HepG2 (cell line): ENCODE measurements at regions of chr10 and their contacts with region 1.

Region 1: DNA sequence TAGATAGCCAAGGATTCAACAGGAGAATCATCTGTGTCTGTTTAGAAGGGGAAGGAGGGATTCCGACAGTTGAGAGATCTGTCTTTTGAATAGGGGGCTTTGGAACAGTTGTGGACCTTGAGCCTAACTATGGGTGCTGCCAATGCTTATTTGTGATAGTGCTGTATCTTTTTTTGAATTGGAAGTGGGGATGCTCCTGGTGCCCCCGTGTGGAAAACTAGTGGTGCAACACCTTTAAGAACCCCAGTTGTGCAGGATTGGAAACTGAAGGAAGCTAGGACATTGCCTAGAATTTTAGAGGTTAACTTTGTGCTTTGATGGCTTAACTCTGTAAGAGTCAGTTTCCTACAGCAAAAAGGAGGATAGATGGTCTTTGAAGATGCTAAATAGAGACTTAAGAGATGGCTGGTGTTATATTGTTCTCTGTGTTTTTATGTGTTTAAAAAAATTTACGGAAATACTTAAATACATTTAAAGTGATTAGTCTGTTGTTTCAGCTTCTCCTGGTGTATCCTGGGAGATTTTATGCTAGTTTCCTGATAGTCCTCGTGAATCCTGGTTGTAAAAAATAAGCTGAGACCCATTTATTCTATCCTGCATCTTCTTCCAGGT is 69.3 kb downstream of the AP3M1 start:
- DNase-seq: peak; percentile 50
- ATAC-seq: peak; percentile 75
- H3K4me3 ChIP-seq: no peak overlapping the region
- H3K27ac ChIP-seq: no peak overlapping the region
- H3K4me1 ChIP-seq: no peaks in the 10 kb centered on the region
- H3K27me3 ChIP-seq: no peaks in the 10 kb centered on the region
- CTCF ChIP-seq: peak; percentile 69
- EP300 ChIP-seq: no peak
- POLR2A ChIP-seq: no peak
- RAD21 ChIP-seq: 0 out of 2 replicates have a peak, but pooled peaks have one; percentile 36

Region 2: DNA sequence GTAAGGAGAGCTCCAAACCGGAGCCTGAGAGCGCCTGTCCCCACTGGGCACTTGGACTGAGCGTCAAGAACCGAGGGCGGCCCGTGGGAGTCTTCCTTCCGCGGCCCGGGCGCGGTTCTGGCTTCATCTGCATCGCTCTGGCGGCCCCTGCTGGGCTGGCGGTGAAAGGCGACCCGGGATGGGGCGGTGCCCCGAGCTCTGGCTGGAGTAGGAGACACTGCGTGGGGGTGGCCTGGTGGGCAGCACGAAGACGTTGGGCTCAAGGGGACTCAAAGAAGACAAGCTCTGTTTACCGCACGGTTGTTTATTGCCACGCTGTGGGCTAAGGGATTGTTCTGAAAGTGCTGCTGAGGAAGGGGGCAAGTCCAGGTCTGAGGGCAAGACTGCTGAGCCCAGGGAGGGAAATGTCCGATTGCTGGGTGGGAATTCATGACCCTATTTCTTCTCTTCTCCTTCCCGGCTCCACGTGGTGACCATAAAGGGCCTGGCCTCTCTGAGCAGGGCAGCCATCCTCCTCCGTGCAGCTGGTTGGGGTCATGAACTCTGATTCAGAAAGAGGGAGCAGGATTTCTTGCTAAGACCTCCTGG is 140.6 kb before region 1 on chr10:
- CTCF ChIA-PET with region 1: no interaction called
- POLR2A ChIA-PET with region 1: no interaction called
- in situ Hi-C with region 1: no loop called
- intact Hi-C with region 1: loop called (anchors 10 kb)
- DNase-seq: peak; percentile 32
- ATAC-seq: peak; percentile 96
- H3K4me3 ChIP-seq: peak overlapping the region in 2 of 3 experiments; percentile 21 to 52; a peak in 4 of 6 replicates
- H3K27ac ChIP-seq: no peak overlapping the region
- H3K4me1 ChIP-seq: peaks cover 7% of the 10 kb centered on the region
- H3K27me3 ChIP-seq: peaks cover 0 to 23% of the 10 kb centered on the region in 2 experiments; a peak in 3 of 5 replicates
- CTCF ChIP-seq: peak; percentile 97
- EP300 ChIP-seq: no peak
- POLR2A ChIP-seq: no peak
- RAD21 ChIP-seq: peak; percentile 92

Region 3: DNA sequence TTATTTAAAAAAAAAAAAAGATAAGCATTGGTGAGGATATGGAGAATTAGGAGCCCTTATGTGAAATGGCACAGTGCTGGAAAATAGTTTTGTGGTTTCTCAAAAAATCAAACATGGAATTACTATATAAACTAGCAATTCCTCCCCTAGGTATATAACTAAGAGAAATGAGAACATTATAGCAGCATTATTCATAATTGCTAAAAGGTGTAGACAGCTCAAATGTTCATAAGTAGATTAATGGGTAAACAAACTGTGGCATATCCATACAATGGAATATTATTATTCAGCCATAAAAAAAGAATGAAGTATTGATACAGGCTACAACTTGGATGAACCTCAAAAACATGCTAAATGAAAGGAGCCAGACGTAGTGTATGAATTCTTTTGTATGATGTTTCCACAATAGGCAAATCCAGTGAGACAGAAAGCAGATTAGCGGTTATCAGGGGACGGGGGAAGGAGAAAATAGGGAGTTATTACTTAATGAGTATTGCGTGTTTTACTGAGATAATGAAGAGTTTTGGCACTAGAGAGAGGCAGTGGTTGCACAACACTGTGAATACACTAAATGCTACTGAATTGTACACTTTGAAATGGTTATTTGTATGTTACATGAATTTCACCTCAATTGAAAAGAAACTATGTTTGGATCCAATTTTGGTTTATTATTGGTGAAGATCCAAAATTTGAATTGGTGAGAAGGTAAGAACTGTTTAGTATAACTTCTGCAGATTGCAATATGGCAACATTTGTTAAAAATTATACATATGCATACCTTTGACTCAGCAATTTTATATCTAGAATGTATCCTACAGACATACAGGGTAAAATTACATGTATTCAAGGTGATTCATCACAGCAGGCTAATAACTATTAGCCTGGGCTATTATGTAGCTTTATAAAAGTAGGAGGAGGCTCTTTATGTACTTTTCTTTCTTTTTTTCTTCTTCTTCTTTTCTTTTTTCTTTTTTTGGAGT is 13.6 kb before region 1 on chr10:
- CTCF ChIA-PET with region 1: no interaction called
- POLR2A ChIA-PET with region 1: no interaction called
- in situ Hi-C with region 1: no loop called
- intact Hi-C with region 1: no loop called
- DNase-seq: no peak
- ATAC-seq: no peak
- H3K4me3 ChIP-seq: no peak overlapping the region
- H3K27ac ChIP-seq: no peak overlapping the region
- H3K4me1 ChIP-seq: no peaks in the 10 kb centered on the region
- H3K27me3 ChIP-seq: no peaks in the 10 kb centered on the region
- CTCF ChIP-seq: no peak
- EP300 ChIP-seq: no peak
- POLR2A ChIP-seq: no peak
- RAD21 ChIP-seq: no peak

Region 4: GRCh38 chr10:74542065-74542464 is 460.8 kb after region 1 on chr10:
- CTCF ChIA-PET with region 1: no interaction called
- POLR2A ChIA-PET with region 1: no interaction called
- in situ Hi-C with region 1: no loop called
- intact Hi-C with region 1: no loop called
- DNase-seq: no peak
- ATAC-seq: no peak
- H3K4me3 ChIP-seq: no peak overlapping the region
- H3K27ac ChIP-seq: no peak overlapping the region
- H3K4me1 ChIP-seq: no peaks in the 10 kb centered on the region
- H3K27me3 ChIP-seq: no peaks in the 10 kb centered on the region
- CTCF ChIP-seq: no peak
- EP300 ChIP-seq: no peak
- POLR2A ChIP-seq: no peak
- RAD21 ChIP-seq: no peak